Activated T-helper 2 cell treated with anti-CD3 and anti-CD28 coated beads, Interferon-gamma antibody, Interleukin-2, Interleukin-4, amounts not matched to agents 10 μg/mL and 5 μg/mL and 100 μg/mL, durations not matched to agents 14 hours and 24 hours and 36 hours (primary cell): ENCODE measurements at regions of chr15 and their contacts with region 1.

Region 1: GRCh38 chr15:62060113-62060895 is at the start of gene VPS13C:
- DNase-seq: peak; percentile 91
- H3K4me3 Mint-ChIP-seq: peak within 1 kb of the TSS; percentile 92
- H3K27ac Mint-ChIP-seq: peak within 1 kb of the TSS; percentile 96
- H3K4me1 Mint-ChIP-seq: peaks cover 22% of the 10 kb centered on the region
- H3K27me3 Mint-ChIP-seq: peaks cover 26% of the 10 kb centered on the region
- total RNA-seq, gene VPS13C: 53.3 and 57.4 TPM in 2 replicates

Region 2: DNA sequence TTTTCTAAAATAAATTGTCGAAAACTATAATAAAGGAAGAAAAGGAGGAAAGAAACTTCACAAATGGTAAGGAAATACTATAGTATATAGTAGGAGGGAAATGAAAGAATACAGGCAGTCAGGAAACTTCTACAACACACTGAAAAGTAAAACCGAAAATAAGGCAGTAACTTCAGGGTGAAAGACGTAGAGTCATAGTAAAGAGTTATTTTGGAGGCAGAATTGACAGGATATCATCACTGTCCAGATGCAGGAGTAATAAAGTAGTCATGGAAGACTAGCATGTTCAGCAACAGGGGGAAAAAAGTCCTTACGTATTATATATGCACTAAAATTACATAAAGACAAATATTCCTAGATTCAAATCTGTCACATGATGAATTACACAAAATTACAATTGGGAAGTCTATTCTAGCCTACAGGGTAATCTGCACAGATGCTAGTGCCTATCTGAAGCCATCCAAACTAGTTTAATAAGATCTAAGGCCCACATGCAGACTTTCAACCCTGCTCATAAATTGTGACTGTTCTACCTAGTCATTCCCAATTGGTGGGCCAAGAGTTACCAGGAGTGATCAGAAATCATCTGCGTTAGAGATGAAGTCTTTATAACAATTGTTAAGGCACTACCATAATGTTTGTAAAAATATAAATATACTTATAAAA is 14.1 kb before region 1 on chr15:
- intact Hi-C with region 1: loop called (anchors 1 kb)
- DNase-seq: no peak
- H3K4me3 Mint-ChIP-seq: peak overlapping the region; percentile 23
- H3K27ac Mint-ChIP-seq: peak overlapping the region; percentile 43
- H3K4me1 Mint-ChIP-seq: peaks cover 14% of the 10 kb centered on the region
- H3K27me3 Mint-ChIP-seq: no peaks in the 10 kb centered on the region

Region 3: GRCh38 chr15:62534996-62535395 is 474.7 kb after region 1 on chr15:
- intact Hi-C with region 1: no loop called
- DNase-seq: no peak
- H3K4me3 Mint-ChIP-seq: no peak overlapping the region
- H3K27ac Mint-ChIP-seq: no peak overlapping the region
- H3K4me1 Mint-ChIP-seq: no peaks in the 10 kb centered on the region
- H3K27me3 Mint-ChIP-seq: peaks cover 2% of the 10 kb centered on the region